Endothelial cell of umbilical vein (primary cell): ENCODE measurements at regions of chr3 and their contacts with region 1.

Region 1: GRCh38 chr3:185733980-185734724 is 90.7 kb downstream of the IGF2BP2 start:
- DNase-seq: peak; percentile 87
- H3K4me3 ChIP-seq: no peak overlapping the region
- H3K27ac ChIP-seq: peak overlapping the region; percentile 100
- H3K4me1 ChIP-seq: peaks cover 93% of the 10 kb centered on the region
- H3K27me3 ChIP-seq: no peaks in the 10 kb centered on the region
- CTCF ChIP-seq: peak; percentile 56 to 62
- POLR2A ChIP-seq: no peak

Region 2: DNA sequence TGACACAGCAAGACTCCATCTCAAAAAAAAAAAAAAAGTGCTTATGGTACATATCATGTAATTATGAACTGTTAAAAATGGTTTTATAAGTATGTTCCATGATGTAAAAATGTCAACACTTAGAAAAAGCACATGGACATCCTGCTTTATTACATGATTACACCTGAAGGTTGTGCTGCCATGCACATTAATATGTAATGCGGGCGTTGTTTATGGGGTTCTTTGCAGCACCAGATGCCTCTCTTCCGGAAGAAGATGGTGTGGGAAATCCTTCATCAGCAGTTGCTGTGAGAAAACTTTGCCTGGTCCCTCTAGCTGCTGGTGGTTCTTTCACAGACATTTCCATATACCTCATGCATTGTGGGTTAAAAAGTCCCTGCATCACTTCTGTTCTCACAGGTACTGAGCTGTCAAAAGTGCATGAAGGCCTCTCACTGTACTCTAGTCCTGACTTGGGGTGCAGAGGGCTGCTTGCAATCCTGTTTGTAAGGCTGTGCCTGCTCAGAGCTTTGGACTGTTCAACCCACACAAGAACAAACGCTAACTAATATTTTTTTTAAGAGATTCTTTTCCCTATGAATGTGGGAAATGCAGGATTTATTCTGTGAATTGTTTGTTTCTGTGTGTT is 104.5 kb before region 1 on chr3:
- CTCF ChIA-PET with region 1: no interaction called
- POLR2A ChIA-PET with region 1: no interaction called
- dilution Hi-C with region 1: no loop called
- intact Hi-C with region 1: no loop called
- DNase-seq: no peak
- H3K4me3 ChIP-seq: no peak overlapping the region
- H3K27ac ChIP-seq: no peak overlapping the region
- H3K4me1 ChIP-seq: peaks cover 12% of the 10 kb centered on the region
- H3K27me3 ChIP-seq: no peaks in the 10 kb centered on the region
- CTCF ChIP-seq: no peak
- POLR2A ChIP-seq: peak; percentile 52

Region 3: GRCh38 chr3:185702262-185703225 is 31.6 kb before region 1 on chr3:
- CTCF ChIA-PET with region 1: interaction called, 4 read pairs
- POLR2A ChIA-PET with region 1: no interaction called
- dilution Hi-C with region 1: no loop called
- intact Hi-C with region 1: loop called (anchors 1 kb)
- DNase-seq: peak; percentile 62
- H3K4me3 ChIP-seq: peak overlapping the region in 1 of 3 experiments; percentile 16
- H3K27ac ChIP-seq: peak overlapping the region; percentile 49
- H3K4me1 ChIP-seq: peaks cover 41% of the 10 kb centered on the region
- H3K27me3 ChIP-seq: no peaks in the 10 kb centered on the region
- CTCF ChIP-seq: no peak
- POLR2A ChIP-seq: no peak

Region 4: GRCh38 chr3:185717121-185717520 is 17.0 kb before region 1 on chr3:
- CTCF ChIA-PET with region 1: interaction called, 15 read pairs
- POLR2A ChIA-PET with region 1: interaction called, 3 read pairs
- dilution Hi-C with region 1: no loop called
- intact Hi-C with region 1: loop called (anchors 1 kb)
- DNase-seq: peak; percentile 39
- H3K4me3 ChIP-seq: no peak overlapping the region
- H3K27ac ChIP-seq: peak overlapping the region; percentile 27
- H3K4me1 ChIP-seq: peaks cover 33% of the 10 kb centered on the region
- H3K27me3 ChIP-seq: no peaks in the 10 kb centered on the region
- CTCF ChIP-seq: no peak
- POLR2A ChIP-seq: no peak

Region 5: GRCh38 chr3:185824476-185825378 is 90.6 kb after region 1 on chr3 and contains the start of gene IGF2BP2:
- CTCF ChIA-PET with region 1: interaction called, 47 read pairs
- POLR2A ChIA-PET with region 1: interaction called, 5 read pairs
- dilution Hi-C with region 1: no loop called
- intact Hi-C with region 1: loop called (anchors 1 kb)
- DNase-seq: peak; percentile 84
- H3K4me3 ChIP-seq: peak within 1 kb of the TSS; percentile 87 to 100 (median 98)
- H3K27ac ChIP-seq: peak within 1 kb of the TSS; percentile 84
- H3K4me1 ChIP-seq: peaks cover 32% of the 10 kb centered on the region
- H3K27me3 ChIP-seq: no peaks in the 10 kb centered on the region
- CTCF ChIP-seq: peak in 1 of 2 donors; percentile 11
- POLR2A ChIP-seq: peak; percentile 69
- total RNA-seq, gene IGF2BP2: 122 and 130 TPM in 2 replicates

Region 6: DNA sequence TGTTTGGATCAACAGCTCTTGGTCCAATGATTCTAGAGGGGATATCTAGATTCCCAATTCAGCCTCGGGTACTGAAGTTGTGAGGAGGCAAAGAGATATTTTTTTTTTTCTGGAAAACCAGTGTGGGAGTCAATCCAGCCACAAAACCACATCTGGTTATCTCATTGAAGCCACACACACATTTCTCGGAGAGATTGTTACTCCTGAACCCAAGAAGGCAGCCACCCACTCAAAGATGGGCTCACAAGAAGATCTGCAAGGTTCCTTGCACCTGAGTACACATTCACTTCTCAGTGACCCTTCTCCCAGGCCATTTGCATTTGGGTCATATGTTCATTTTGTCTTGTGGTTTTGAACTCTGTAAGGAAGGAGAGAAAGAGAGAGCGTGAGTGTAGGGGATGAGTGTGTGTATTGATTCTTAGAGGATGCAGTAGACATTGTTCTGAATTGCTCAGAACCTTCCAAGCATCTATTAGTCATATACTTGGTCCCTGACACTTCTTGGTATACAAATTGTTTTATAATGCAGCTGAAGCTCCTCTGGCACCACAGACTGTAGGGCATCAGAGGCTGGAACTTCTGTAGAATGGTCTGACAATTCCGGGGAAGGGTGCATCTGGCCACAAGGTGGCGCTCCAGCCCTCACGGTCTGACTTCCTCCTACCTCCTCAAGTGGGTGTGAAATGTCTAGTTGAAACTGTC is 243.0 kb after region 1 on chr3:
- CTCF ChIA-PET with region 1: no interaction called
- POLR2A ChIA-PET with region 1: no interaction called
- dilution Hi-C with region 1: no loop called
- intact Hi-C with region 1: loop called (anchors 5 kb)
- DNase-seq: peak; percentile 75
- H3K4me3 ChIP-seq: no peak overlapping the region
- H3K27ac ChIP-seq: no peak overlapping the region
- H3K4me1 ChIP-seq: peaks cover 6% of the 10 kb centered on the region
- H3K27me3 ChIP-seq: no peaks in the 10 kb centered on the region
- CTCF ChIP-seq: peak; percentile 85 to 93
- POLR2A ChIP-seq: no peak

Region 7: GRCh38 chr3:185992831-185993374 is 258.8 kb after region 1 on chr3:
- CTCF ChIA-PET with region 1: no interaction called
- POLR2A ChIA-PET with region 1: no interaction called
- dilution Hi-C with region 1: no loop called
- intact Hi-C with region 1: no loop called
- DNase-seq: no peak
- H3K4me3 ChIP-seq: no peak overlapping the region
- H3K27ac ChIP-seq: no peak overlapping the region
- H3K4me1 ChIP-seq: no peaks in the 10 kb centered on the region
- H3K27me3 ChIP-seq: peaks cover 2% of the 10 kb centered on the region in 2 experiments
- CTCF ChIP-seq: no peak
- POLR2A ChIP-seq: no peak